ENCODE measurements at regions of chr17 and their contacts with region 1.

Region 1: DNA sequence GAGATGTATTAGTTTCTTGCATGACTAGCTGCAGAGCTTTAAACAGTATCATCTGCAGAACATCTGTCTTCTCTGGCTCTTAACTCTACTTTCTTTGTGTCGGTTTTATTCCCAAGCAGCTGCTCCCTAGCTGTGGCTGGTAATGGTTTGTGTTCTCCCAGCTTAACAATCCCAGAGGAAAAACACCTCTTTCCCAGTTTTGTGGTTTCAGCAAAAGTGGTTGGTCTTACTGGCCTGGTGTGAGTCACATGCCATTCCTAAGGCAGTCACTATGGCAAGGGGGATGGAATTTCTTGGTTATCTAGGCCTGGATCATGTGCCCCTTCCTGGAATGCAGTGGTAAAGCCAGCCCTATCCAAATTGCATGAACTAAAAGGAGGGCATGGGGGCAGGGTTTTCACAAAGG is 27.5 kb downstream of the OMG start:
- DNase-seq: peak in 1 of 2 experiments; percentile 34
- H3K4me3 ChIP-seq: 0 out of 8 replicates have a peak overlapping the region, but pooled peaks of 1 of the 4 experiments have one; percentile 4
- H3K27ac ChIP-seq: peak overlapping the region; percentile 35; the same call in 1 of the 2 replicates
- H3K4me1 ChIP-seq: peaks cover 0 to 4% (median 1%) of the 10 kb centered on the region in 4 experiments; a peak in 4 of 7 replicates
- H3K27me3 ChIP-seq: peaks cover 0 to 1% (median 0%) of the 10 kb centered on the region in 4 experiments; a peak in 1 of 7 replicates
- CTCF ChIP-seq: no peak
- EP300 ChIP-seq: no peak
- POLR2A ChIP-seq: no peak
- RAD21 ChIP-seq: no peak

Region 2: DNA sequence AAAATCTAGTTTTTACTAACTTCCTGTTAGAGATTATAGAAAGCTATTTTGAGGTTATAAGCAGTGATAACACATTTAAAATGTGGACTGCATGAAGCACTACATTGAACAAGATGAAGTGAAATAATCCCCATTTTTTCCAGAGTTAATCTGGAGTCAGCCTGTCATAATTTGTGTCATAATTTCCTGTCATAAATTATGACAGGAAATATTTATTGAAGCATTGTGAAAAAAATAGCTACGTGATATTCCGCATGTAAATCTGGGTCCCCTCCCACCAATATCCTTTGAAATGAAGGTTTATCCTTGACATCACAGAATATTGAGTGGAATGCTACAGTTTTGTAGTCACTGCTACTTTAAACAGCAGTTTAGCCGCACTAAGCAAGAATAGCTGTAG is 12.6 kb before region 1 on chr17:
- CTCF ChIA-PET with region 1: interaction called, 11 read pairs
- POLR2A ChIA-PET with region 1: interaction called, 3 read pairs
- DNase-seq: no peak
- H3K4me3 ChIP-seq: no peak overlapping the region
- H3K27ac ChIP-seq: no peak overlapping the region
- H3K4me1 ChIP-seq: no peaks in the 10 kb centered on the region
- H3K27me3 ChIP-seq: no peaks in the 10 kb centered on the region
- CTCF ChIP-seq: no peak
- EP300 ChIP-seq: no peak
- POLR2A ChIP-seq: no peak
- RAD21 ChIP-seq: no peak

Region 3: DNA sequence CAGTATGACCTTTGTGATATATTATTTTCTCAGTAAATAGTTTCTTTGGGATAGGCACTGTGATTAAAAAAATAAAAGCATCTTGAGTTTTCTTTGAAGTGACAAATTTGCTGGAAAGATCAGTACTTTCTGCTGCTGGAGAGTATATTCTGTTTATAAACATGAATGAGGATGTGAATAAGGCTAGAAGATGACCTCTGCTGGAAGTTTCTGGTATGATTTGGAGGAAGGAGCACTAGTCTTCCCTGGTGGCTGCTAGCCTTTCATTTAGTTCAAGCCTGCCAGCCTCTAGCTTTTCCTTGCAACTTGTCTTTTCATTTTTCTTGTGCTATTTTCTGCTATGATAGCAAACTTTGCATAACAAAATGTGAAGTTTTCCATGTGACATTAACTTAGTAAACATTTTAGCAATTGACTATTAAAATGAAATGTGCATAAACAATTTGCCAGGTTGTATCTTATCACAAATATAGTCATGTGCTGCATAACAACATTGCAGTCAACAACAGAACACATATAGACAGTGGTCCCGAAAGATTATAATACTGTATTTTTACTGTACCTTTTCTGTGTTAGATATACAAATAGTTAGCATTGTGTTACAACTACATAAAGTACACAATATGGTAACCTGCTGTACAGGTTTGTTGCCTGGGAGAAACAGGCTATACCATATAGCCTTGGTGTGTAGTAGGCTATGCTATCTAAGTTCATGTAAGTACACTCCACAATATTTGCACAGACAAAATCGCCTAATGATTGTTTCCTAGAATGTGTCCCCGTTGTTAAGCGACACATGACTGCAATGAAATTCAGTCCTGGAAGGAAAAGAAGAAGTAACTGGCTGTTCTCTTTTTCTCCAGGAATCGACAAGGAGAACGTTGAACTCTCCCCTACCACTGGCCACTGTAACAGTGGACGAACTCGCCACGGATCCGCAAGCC is 103.8 kb after region 1 on chr17:
- CTCF ChIA-PET with region 1: interaction called, 10 read pairs
- POLR2A ChIA-PET with region 1: no interaction called
- DNase-seq: no peak
- H3K4me3 ChIP-seq: no peak overlapping the region
- H3K27ac ChIP-seq: no peak overlapping the region
- H3K4me1 ChIP-seq: peaks cover 0 to 5% (median 1%) of the 10 kb centered on the region in 4 experiments; a peak in 3 of 7 replicates
- H3K27me3 ChIP-seq: no peaks in the 10 kb centered on the region
- CTCF ChIP-seq: peak in 2 of 3 experiments; percentile 55 to 62; a peak in 3 of 4 replicates
- EP300 ChIP-seq: no peak
- POLR2A ChIP-seq: no peak
- RAD21 ChIP-seq: peak; percentile 66 to 72

Measured in H1 (cell line).